H1 (cell line): ENCODE measurements at regions of chr3 and their contacts with region 1.

Region 1: GRCh38 chr3:160565442-160566403 is at the start of gene KPNA4:
- DNase-seq: peak; percentile 92 to 95
- H3K4me3 ChIP-seq: peak within 1 kb of the TSS; percentile 76 to 91 (median 82)
- H3K27ac ChIP-seq: peak within 1 kb of the TSS; percentile 91
- H3K4me1 ChIP-seq: peaks cover 0 to 4% (median 1%) of the 10 kb centered on the region in 4 experiments; a peak in 4 of 7 replicates
- H3K27me3 ChIP-seq: no peaks in the 10 kb centered on the region
- CTCF ChIP-seq: no peak
- EP300 ChIP-seq: no peak
- POLR2A ChIP-seq: peak; percentile 81 to 84
- RAD21 ChIP-seq: no peak; a peak in 1 of 4 replicates
- total RNA-seq, gene KPNA4: 81.9 and 86.7 TPM in 2 replicates

Region 2: DNA sequence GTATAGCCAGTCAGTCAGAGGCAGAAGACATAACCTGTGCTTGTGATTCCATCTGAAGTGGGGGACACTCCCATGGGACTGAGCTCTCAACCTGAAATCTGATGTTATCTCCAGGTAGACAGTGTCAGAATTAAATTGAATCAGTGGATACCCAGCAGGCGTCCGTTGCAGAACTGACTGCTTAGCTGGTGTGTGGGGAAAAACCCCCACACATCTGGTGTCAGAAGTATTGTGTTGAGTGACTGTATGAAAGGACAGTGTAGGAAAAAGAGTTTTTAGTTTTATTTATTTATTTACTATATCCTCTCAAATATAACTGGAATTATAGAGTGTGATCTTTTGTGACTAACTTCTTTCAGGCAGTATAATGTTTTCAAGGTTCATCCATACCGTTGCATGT is 10.7 kb before region 1 on chr3:
- CTCF ChIA-PET with region 1: interaction called, 4 read pairs
- POLR2A ChIA-PET with region 1: interaction called, 25 read pairs
- DNase-seq: no peak
- H3K4me3 ChIP-seq: no peak overlapping the region
- H3K27ac ChIP-seq: no peak overlapping the region
- H3K4me1 ChIP-seq: peaks cover 3 to 13% (median 8%) of the 10 kb centered on the region in 4 experiments; a peak in 6 of 7 replicates
- H3K27me3 ChIP-seq: no peaks in the 10 kb centered on the region
- CTCF ChIP-seq: no peak
- EP300 ChIP-seq: no peak
- POLR2A ChIP-seq: 0 out of 3 replicates have a peak, but pooled peaks of 1 of the 2 experiments have one; percentile 5
- RAD21 ChIP-seq: no peak

Region 3: GRCh38 chr3:160765211-160765610 is 199.5 kb after region 1 on chr3:
- CTCF ChIA-PET with region 1: no interaction called
- POLR2A ChIA-PET with region 1: no interaction called
- DNase-seq: no peak
- H3K4me3 ChIP-seq: no peak overlapping the region
- H3K27ac ChIP-seq: no peak overlapping the region
- H3K4me1 ChIP-seq: no peaks in the 10 kb centered on the region
- H3K27me3 ChIP-seq: no peaks in the 10 kb centered on the region
- CTCF ChIP-seq: no peak
- EP300 ChIP-seq: no peak
- POLR2A ChIP-seq: no peak
- RAD21 ChIP-seq: no peak